ENCODE measurements at regions of chr13 and their contacts with region 1.

Region 1: DNA sequence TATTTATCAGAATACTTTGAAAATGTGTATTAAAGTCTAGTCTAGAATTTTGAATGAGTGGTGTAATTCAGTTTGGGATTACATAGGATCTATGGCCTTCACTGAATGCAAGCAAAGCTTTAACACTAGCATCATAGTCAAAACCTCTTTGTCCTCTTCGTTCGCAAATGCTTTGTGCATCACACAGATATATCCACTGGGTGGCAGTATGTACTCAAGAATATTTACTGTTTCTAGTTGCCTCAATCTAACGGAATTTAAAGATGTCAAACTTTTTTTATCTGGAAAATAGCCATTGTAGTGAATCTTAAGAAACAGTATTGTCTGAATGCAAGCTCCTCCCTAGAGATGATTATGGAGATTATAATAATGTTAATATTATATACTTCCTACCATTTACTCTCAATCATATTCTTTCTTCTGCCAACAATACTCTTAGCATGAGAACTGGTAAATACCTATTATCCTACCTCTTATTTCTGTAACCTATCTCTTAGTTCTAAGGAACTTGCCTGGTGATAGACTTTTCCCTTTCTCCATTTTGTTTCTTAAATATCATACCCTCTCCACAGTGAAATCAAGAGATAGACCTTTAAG is 25.8 kb downstream of the LACC1 start:
- DNase-seq: peak; percentile 74
- H3K4me3 ChIP-seq: no peak overlapping the region
- H3K27ac ChIP-seq: no peak overlapping the region
- H3K4me1 ChIP-seq: no peaks in the 10 kb centered on the region
- CTCF ChIP-seq: peak; percentile 91

Region 2: DNA sequence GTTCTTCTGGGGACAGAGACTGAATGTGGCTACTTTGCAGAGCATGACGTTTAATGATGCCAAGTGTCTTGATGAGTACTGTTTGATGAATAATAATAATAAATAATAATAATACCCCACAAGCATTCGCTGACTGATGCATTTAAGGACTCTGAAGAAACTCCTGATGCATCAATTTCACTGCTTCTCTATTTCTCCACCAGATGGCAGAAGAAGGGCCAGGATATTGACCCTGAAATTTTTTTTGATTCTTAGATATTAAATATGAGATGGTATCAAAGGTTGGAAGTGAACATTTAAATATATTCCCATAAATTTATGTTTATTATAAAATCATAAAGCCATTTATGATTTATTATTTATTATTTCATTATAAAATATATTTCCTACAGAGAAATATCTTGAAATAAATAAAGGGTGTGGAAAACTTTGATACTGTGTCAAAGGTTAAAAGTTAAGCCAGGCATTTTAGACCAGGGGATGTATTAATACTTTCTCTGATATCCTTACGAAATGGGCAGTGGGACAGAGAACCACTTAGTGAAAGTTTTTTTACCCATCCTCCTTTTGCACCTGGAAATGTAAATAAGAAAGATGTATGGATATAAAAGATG is 145.0 kb after region 1 on chr13:
- CTCF ChIA-PET with region 1: no interaction called
- POLR2A ChIA-PET with region 1: interaction called, 3 read pairs
- intact Hi-C with region 1: loop called (anchors 5 kb)
- DNase-seq: peak; percentile 27
- H3K4me3 ChIP-seq: no peak overlapping the region
- H3K27ac ChIP-seq: no peak overlapping the region
- H3K4me1 ChIP-seq: no peaks in the 10 kb centered on the region
- CTCF ChIP-seq: peak; percentile 83

Region 3: DNA sequence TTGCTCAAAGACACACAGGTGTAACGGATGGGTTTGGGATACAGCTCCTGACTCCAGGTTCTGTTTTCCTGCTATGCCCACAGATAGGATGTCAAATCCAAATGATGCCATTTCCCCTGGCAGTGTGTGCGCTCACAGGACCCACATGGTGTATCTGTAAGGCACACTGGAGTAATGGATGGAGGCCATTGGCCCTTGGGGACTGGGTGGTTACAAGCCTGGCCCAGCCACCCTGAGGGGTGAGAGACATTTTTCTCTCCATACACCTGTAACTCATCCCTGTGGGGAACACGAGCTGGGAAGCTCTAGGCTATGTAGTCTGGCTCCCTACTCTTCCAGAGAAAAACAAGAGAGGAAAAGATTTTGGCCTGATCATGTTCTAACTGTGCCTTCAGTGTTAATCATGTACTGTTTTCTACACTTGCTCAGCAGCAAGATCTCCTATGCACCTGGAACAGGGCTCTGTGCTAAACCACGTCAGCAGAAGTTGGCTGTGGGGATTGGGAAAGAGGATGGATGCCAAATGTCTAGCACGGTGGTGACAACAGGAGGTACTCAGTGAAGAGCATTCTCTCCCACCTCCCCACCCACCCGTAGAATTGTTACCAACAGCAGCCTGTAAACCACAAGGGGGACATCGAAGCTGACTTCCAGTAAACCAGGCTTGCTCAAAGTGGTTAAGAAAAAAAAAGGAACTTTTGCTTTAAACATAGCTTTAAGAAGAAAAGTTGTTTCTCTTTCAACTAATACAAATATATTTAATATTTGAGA is 211.2 kb after region 1 on chr13:
- CTCF ChIA-PET with region 1: no interaction called
- POLR2A ChIA-PET with region 1: no interaction called
- intact Hi-C with region 1: no loop called
- DNase-seq: peak; percentile 19
- H3K4me3 ChIP-seq: no peak overlapping the region
- H3K27ac ChIP-seq: no peak overlapping the region
- H3K4me1 ChIP-seq: peaks cover 13% of the 10 kb centered on the region
- CTCF ChIP-seq: no peak

Region 4: GRCh38 chr13:44243198-44243857 is 337.8 kb after region 1 on chr13:
- CTCF ChIA-PET with region 1: no interaction called
- POLR2A ChIA-PET with region 1: no interaction called
- intact Hi-C with region 1: loop called (anchors 10 kb)
- DNase-seq: peak; percentile 84
- H3K4me3 ChIP-seq: no peak overlapping the region
- H3K27ac ChIP-seq: peak overlapping the region; percentile 51
- H3K4me1 ChIP-seq: peaks cover 38% of the 10 kb centered on the region
- CTCF ChIP-seq: peak; percentile 79

Region 5: GRCh38 chr13:44468874-44469273 is 563.3 kb after region 1 on chr13:
- CTCF ChIA-PET with region 1: no interaction called
- POLR2A ChIA-PET with region 1: interaction called, 3 read pairs
- intact Hi-C with region 1: loop called (anchors 2 kb)
- DNase-seq: no peak
- H3K4me3 ChIP-seq: no peak overlapping the region
- H3K27ac ChIP-seq: no peak overlapping the region
- H3K4me1 ChIP-seq: no peaks in the 10 kb centered on the region
- CTCF ChIP-seq: no peak

Region 6: GRCh38 chr13:44969551-44970484 is 1064.3 kb after region 1 on chr13:
- CTCF ChIA-PET with region 1: no interaction called
- POLR2A ChIA-PET with region 1: no interaction called
- intact Hi-C with region 1: loop called (anchors 5 kb)
- DNase-seq: peak; percentile 32
- H3K4me3 ChIP-seq: no peak overlapping the region
- H3K27ac ChIP-seq: no peak overlapping the region
- H3K4me1 ChIP-seq: no peaks in the 10 kb centered on the region
- CTCF ChIP-seq: peak; percentile 92

Measured in OCI-LY7 (cell line).